Heart left ventricle (tissue), 16 donors: ENCODE measurements at regions of chr13 and their contacts with region 1.

Region 1: GRCh38 chr13:98576963-98577822 is at the start of gene STK24:
- DNase-seq: peak; percentile 74 to 88 (median 85)
- ATAC-seq: peak; percentile 58 to 87 (median 79)
- H3K4me3 ChIP-seq: peak within 1 kb of the TSS; percentile 74 to 99 (median 94)
- H3K27ac ChIP-seq: peak within 1 kb of the TSS; percentile 93 to 99 (median 97)
- H3K4me1 ChIP-seq: peaks cover 5 to 58% (median 36%) of the 10 kb centered on the region in 12 donors
- H3K27me3 ChIP-seq: no peaks in the 10 kb centered on the region
- CTCF ChIP-seq: peak in 1 of 12 donors; percentile 12
- POLR2A ChIP-seq: no peak
- total RNA-seq, gene STK24: 56.5 to 82.6 (median 63.0) TPM

Region 2: DNA sequence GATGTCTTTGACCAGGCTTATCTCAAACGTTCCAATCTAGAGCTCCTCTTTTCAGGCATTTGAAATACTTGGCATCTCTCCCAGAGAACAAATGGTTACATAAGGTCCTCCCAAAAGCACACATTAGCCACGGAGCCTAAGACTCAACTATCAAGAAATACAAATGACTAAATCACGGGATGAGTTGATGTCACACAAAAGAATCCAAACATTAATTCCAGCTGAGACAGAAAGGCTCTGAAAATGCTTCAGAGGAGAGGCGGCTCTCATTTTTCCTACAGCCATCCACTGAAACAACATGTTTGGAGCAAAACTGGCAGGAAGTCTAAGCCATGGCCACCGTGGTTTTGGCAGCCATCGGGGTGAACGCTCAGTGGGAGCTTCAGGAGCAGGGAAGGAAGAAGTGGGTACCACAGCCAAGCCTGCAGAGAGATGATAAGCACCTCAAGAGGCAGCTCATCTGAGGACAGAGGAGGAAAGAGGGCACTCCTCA is 122.8 kb before region 1 on chr13:
- intact Hi-C with region 1: loop called in 7 of 10 experiments (anchors 5 to 10 kb)
- DNase-seq: no peak
- ATAC-seq: peak; percentile 55 to 76 (median 64)
- H3K4me3 ChIP-seq: peak overlapping the region in 1 of 12 donors; percentile 9
- H3K27ac ChIP-seq: peak overlapping the region; percentile 22 to 86 (median 66)
- H3K4me1 ChIP-seq: peaks cover 7 to 65% (median 37%) of the 10 kb centered on the region in 12 donors
- H3K27me3 ChIP-seq: no peaks in the 10 kb centered on the region
- CTCF ChIP-seq: no peak
- POLR2A ChIP-seq: no peak

Region 3: DNA sequence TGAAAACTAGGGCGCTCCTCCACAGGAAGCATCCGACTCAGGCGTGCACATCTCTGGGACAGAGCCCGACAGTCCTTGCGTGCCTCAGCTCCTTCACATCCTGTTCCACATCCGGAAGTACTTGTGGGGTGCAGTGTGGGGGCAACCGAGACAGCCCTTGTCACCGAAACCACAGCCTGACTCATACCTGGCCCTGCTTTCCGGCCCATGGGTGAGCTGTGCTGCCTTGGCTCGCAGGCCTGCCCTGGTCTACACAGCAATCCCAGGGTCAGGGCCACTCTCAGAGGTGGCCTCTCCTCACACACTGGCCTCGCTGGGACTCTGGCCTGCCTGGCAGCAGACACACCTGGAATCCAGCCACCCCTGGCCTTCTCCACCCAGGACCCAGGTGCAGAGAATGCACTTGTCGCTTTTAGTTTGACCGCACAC is 100.6 kb before region 1 on chr13:
- intact Hi-C with region 1: loop called in 9 of 10 experiments (anchors 5 to 10 kb)
- DNase-seq: peak in 3 of 5 donors; percentile 43 to 79 (median 77)
- ATAC-seq: peak; percentile 6 to 57 (median 45)
- H3K4me3 ChIP-seq: no peak overlapping the region
- H3K27ac ChIP-seq: peak overlapping the region in 7 of 12 donors; percentile 8 to 56 (median 42)
- H3K4me1 ChIP-seq: peaks cover 2 to 84% (median 61%) of the 10 kb centered on the region in 12 donors
- H3K27me3 ChIP-seq: no peaks in the 10 kb centered on the region
- CTCF ChIP-seq: no peak
- POLR2A ChIP-seq: no peak

Region 4: GRCh38 chr13:98509271-98510155 is 67.7 kb before region 1 on chr13:
- intact Hi-C with region 1: loop called in 5 of 10 experiments (anchors 2 to 10 kb)
- DNase-seq: peak in 3 of 5 donors; percentile 41 to 82 (median 74)
- ATAC-seq: peak; percentile 64 to 84 (median 75)
- H3K4me3 ChIP-seq: no peak overlapping the region
- H3K27ac ChIP-seq: peak overlapping the region; percentile 4 to 81 (median 42)
- H3K4me1 ChIP-seq: peaks cover 20 to 87% (median 67%) of the 10 kb centered on the region in 12 donors
- H3K27me3 ChIP-seq: no peaks in the 10 kb centered on the region
- CTCF ChIP-seq: no peak
- POLR2A ChIP-seq: no peak

Region 5: DNA sequence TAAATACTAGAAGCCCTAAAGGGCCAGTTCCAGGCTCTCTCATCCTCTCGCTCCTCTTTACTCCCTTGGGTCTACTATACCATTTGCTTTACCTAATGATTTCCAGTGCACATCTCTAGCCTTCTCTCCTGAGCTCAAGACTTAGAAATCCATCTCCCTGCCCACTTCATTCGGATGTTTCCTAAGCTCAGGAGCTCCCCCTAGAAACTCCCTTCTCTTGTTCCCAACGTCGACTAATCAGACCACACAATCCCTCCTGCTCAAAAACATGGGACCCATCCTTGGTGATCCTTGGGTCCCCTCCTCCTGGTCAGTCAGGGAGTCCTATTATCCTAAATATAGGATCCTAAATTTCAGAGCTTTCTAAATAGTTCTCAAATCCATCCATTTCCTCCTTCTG is 20.9 kb after region 1 on chr13:
- intact Hi-C with region 1: loop called in 1 of 10 experiments (anchors 1 kb)
- DNase-seq: no peak
- ATAC-seq: no peak
- H3K4me3 ChIP-seq: no peak overlapping the region
- H3K27ac ChIP-seq: no peak overlapping the region
- H3K4me1 ChIP-seq: no peaks in the 10 kb centered on the region
- H3K27me3 ChIP-seq: no peaks in the 10 kb centered on the region
- CTCF ChIP-seq: peak in 5 of 12 donors; percentile 18 to 35 (median 25)
- POLR2A ChIP-seq: no peak

Region 6: GRCh38 chr13:98653463-98653985 is 76.3 kb after region 1 on chr13:
- intact Hi-C with region 1: loop called in 4 of 10 experiments (anchors 5 kb)
- DNase-seq: peak; percentile 69 to 79 (median 73)
- ATAC-seq: peak; percentile 71 to 94 (median 88)
- H3K4me3 ChIP-seq: no peak overlapping the region
- H3K27ac ChIP-seq: no peak overlapping the region
- H3K4me1 ChIP-seq: peaks cover 0 to 13% (median 0%) of the 10 kb centered on the region in 12 donors
- H3K27me3 ChIP-seq: no peaks in the 10 kb centered on the region
- CTCF ChIP-seq: peak; percentile 82 to 93 (median 89)
- POLR2A ChIP-seq: no peak

Region 7: DNA sequence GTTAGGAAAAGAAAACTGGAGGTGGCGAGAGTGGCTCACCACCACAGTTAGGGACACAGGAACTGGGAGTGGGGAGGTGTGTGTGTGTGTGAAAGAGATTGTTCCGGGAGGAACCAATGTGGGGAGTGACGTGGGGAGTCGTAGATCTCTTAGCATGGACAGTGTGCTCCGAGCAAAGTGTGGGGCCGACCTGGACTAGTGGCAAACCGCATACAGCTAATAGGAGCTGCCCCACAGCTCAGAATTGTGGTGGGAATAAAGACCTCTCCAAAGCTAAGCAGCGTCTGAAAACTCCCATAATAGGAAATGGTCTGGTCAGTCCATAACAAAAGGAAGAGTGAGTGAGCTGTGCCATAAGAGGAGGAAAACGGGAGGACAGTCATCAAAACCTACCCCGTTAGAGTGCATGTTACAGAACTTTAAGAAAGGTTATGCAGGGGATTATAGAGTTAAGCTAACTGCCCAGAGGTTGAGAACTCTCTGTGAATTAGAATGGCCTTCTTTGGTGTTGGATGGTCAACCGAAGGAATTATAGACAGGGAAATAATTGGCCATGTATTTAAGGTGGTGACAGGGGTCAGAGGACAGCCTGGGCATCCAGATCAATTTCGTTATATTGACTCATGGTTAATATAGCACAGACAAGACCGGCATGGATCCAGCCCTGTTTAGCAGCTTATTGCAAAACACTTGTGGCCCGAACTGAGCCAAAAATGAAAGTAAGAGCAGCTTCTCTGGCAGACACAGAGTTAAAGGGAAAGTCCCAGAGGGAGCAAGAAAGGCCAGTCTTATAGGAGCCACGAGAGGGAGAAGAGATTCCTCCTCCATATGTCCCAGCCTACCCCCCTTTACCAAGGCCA is 184.2 kb after region 1 on chr13:
- intact Hi-C with region 1: no loop called
- DNase-seq: no peak
- ATAC-seq: no peak
- H3K4me3 ChIP-seq: peak overlapping the region in 9 of 12 donors; percentile 6 to 40 (median 25)
- H3K27ac ChIP-seq: no peak overlapping the region
- H3K4me1 ChIP-seq: no peaks in the 10 kb centered on the region
- H3K27me3 ChIP-seq: no peaks in the 10 kb centered on the region
- CTCF ChIP-seq: no peak
- POLR2A ChIP-seq: no peak